ENCODE measurements at regions of chr2 and their contacts with region 1.

Region 1: DNA sequence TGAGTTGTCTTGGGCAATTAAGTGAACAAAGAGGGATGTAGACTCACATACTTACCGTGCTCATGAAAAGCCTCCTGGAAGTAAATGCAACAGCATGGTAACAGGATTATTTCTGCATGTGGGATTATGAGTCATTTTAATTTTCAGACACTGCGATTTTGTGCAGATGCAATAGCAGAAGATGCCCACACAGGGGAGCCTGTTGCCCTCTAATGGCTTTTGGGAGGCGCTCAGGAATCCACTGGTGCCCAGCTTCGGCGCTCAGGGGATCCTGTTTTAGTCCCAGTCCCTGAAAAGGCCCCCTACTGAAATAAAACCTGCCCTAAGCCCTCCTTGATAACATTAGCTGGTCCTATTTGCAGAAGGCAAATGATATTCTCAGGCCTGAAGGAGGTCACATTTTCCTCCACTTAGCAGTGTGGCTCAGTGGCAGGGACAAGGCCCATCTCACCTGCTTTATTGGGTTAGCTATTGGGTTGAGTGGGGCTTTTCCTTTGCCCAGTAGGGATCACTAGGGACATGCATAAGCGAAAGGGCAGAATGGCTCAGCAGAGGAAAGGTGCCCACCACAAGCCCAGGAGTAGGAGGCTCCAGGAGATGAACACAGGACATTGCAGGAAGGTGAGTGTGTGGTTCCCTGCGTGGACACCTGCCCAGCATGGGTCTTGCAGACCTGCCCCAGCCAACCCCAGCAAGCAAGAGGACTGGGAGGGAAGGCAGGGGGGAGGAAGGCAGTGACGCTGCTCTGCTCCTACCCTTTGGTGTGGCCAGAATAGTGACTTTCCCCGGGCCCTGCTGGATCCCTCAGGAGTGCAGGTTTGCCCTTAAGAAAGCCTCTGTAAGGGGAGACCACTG is 26.5 kb upstream of the KCNS3 start:
- DNase-seq: peak; percentile 42 to 78 (median 63)
- H3K4me3 ChIP-seq: no peak overlapping the region
- H3K27ac ChIP-seq: no peak overlapping the region
- H3K4me1 ChIP-seq: no peaks in the 10 kb centered on the region
- H3K27me3 ChIP-seq: no peaks in the 10 kb centered on the region
- CTCF ChIP-seq: peak; percentile 77 to 91 (median 90)
- POLR2A ChIP-seq: no peak

Region 2: GRCh38 chr2:17245906-17246305 is 606.1 kb before region 1 on chr2:
- intact Hi-C with region 1: no loop called
- DNase-seq: no peak
- H3K4me3 ChIP-seq: no peak overlapping the region
- H3K27ac ChIP-seq: no peak overlapping the region
- H3K4me1 ChIP-seq: no peaks in the 10 kb centered on the region
- H3K27me3 ChIP-seq: no peaks in the 10 kb centered on the region
- CTCF ChIP-seq: no peak
- POLR2A ChIP-seq: no peak

Region 3: DNA sequence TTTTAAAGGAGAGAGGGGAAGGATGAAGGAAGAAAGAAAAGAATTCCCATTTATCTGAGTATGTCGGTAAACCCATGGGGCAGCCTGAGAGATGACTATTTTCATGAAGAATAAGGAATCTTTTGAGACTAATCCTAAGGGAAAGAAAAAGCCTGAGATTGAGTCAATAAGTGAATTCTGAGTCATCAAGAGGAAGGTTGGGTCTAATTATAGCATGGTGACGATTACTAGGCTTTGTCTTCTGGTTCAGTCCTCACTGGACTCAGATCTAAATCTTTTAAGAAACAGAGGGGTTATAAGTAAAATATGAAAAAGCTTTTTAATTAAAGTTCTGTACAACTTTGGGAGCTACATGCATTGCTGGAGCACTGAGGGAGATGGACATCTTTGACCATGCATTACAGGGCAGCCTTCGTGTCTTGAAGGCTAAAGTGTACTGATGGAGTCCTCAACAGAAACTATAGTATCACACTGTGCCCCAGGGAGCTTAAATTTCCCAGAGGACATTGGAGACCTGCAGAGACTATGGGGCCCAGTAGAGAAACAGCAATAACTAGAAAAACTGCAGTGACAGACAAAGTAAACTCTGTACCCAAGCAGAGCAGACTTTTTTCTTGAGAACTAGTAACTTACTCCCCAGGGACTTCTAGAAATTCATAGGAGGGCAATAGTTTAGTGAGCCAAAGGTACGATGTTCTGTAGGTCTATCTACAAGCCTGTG is 594.6 kb before region 1 on chr2:
- intact Hi-C with region 1: no loop called
- DNase-seq: no peak
- H3K4me3 ChIP-seq: no peak overlapping the region
- H3K27ac ChIP-seq: no peak overlapping the region
- H3K4me1 ChIP-seq: no peaks in the 10 kb centered on the region
- H3K27me3 ChIP-seq: no peaks in the 10 kb centered on the region
- CTCF ChIP-seq: no peak
- POLR2A ChIP-seq: no peak

Region 4: DNA sequence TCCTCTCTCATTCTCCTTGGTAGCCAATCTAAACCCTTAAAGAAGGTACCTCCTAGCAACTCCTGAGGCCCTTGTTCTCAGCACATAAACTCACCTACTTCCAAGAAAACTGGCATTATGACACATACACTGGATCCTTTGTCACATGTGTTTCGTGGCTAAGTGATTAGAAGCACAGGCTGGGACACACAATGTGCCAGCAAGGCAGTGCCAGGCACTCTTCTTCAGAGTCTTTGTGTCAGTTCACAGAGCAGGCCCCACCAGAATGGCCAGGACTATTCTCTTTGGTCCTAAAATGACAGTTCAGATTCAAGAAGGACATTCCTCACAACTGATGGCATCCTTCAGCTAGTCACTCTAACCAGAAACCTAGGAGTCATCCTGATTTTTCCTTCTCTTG is 138.7 kb before region 1 on chr2:
- intact Hi-C with region 1: no loop called
- DNase-seq: no peak
- H3K4me3 ChIP-seq: no peak overlapping the region
- H3K27ac ChIP-seq: no peak overlapping the region
- H3K4me1 ChIP-seq: no peaks in the 10 kb centered on the region
- H3K27me3 ChIP-seq: no peaks in the 10 kb centered on the region
- CTCF ChIP-seq: no peak
- POLR2A ChIP-seq: no peak

Region 5: GRCh38 chr2:18149645-18150246 is 297.8 kb after region 1 on chr2:
- intact Hi-C with region 1: loop called (anchors 5 to 10 kb)
- DNase-seq: no peak
- H3K4me3 ChIP-seq: no peak overlapping the region
- H3K27ac ChIP-seq: no peak overlapping the region
- H3K4me1 ChIP-seq: no peaks in the 10 kb centered on the region
- H3K27me3 ChIP-seq: no peaks in the 10 kb centered on the region
- CTCF ChIP-seq: peak; percentile 46 to 80 (median 56)
- POLR2A ChIP-seq: no peak

Region 6: DNA sequence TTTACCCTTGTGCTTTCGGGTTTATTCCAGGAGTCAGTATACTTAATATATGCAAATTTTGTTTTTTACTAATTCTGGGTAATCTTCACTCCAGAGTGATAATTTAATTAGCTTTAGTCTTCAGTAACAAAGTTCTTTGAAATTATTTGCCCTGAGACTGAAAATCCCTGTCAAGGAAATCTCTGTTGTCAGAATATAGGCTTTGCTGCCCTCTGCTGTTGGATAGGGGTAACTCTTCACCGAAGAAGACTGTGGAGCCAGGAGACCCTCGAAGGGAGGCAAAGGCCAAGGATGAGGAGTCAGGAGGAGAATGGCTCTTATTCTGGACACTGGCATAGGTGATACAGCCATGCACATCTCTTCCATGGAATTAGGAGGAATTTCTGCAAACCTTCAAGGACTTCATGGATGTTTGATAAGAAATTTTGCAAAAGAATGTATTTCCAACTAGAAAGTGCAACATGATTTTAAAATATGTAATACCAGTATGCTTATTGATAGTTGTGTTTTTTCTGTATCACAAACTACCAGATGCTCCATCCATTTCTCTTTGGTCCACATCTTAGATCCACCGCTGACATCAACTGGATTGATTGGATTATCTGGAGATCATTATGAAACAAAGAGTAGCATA is 526.2 kb after region 1 on chr2:
- intact Hi-C with region 1: loop called (anchors 2 to 5 kb)
- DNase-seq: peak; percentile 15 to 59 (median 28)
- H3K4me3 ChIP-seq: no peak overlapping the region
- H3K27ac ChIP-seq: no peak overlapping the region
- H3K4me1 ChIP-seq: no peaks in the 10 kb centered on the region
- H3K27me3 ChIP-seq: no peaks in the 10 kb centered on the region
- CTCF ChIP-seq: peak; percentile 51 to 76 (median 70)
- POLR2A ChIP-seq: no peak

Measured in adrenal gland (tissue), 19 donors.